ENCODE measurements at regions of chr2 and their contacts with region 1.

Region 1: GRCh38 chr2:237558906-237559641 is 7.3 kb upstream of the PRLH start:
- DNase-seq: peak; percentile 80 to 93 (median 87)
- H3K4me3 ChIP-seq: no peak overlapping the region
- H3K27ac ChIP-seq: no peak overlapping the region
- H3K4me1 ChIP-seq: peaks cover 14% of the 10 kb centered on the region
- H3K27me3 ChIP-seq: no peaks in the 10 kb centered on the region
- CTCF ChIP-seq: peak in 1 of 3 donors; percentile 7
- EP300 ChIP-seq: no peak
- POLR2A ChIP-seq: no peak

Region 2: GRCh38 chr2:237512774-237513466 is 46.2 kb before region 1 on chr2:
- intact Hi-C with region 1: loop called in 2 of 4 experiments (anchors 2 to 5 kb)
- DNase-seq: peak; percentile 90 to 94 (median 91)
- H3K4me3 ChIP-seq: no peak overlapping the region
- H3K27ac ChIP-seq: peak overlapping the region in 1 of 2 donors; percentile 86
- H3K4me1 ChIP-seq: peaks cover 25% of the 10 kb centered on the region
- H3K27me3 ChIP-seq: no peaks in the 10 kb centered on the region
- CTCF ChIP-seq: peak; percentile 71 to 95 (median 91)
- EP300 ChIP-seq: no peak
- POLR2A ChIP-seq: no peak

Region 3: GRCh38 chr2:237758185-237758584 is 199.1 kb after region 1 on chr2:
- intact Hi-C with region 1: no loop called
- DNase-seq: no peak
- H3K4me3 ChIP-seq: no peak overlapping the region
- H3K27ac ChIP-seq: no peak overlapping the region
- H3K4me1 ChIP-seq: no peaks in the 10 kb centered on the region
- H3K27me3 ChIP-seq: no peaks in the 10 kb centered on the region
- CTCF ChIP-seq: no peak
- EP300 ChIP-seq: no peak
- POLR2A ChIP-seq: no peak

Region 4: DNA sequence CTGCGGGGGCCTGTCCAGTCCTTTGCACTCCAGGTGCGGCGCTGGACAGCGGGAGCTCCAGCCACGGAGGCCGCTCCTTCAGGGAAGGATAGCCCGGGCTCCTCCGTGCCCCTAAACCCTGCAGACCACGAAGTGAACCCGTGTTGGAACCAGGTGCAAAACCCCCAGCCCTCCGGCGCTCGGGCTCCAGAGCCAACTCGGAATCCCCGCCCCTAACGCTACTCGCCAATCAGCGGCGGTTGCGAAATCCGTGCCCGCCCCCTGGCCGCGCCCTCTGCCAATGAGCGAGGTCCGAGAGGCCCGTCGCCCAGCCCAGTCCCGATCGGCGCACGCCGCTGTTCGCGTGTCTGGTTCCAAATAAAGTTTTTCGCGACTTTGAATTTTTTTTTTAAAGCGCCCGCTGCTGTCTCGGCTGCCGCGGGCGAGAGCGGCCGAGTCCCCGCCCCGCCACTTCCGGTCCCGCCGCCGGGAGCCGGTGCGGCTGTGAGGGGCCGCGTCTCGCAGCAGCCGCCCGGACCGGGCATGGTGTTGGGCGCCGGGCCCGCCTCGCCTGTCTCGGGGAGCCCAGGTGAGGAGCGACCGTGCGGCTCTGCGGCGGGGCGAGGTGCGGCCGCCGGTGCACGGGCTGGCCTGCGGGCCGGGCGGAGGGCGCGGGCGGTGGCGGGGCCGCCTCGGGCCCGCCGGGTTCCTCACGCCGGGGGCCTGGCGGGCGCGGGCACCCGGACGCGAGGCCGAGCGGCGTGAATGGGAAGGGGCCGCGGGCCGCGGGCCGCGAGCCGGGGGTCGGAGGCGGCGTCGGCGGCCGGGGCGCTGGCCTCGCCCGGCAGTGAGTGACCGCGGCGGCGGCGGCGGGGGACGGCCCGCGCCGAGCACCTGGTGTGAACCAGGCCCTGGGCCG is 407.7 kb after region 1 on chr2 and contains the start of gene UBE2F:
- intact Hi-C with region 1: no loop called
- DNase-seq: peak; percentile 96 to 98 (median 98)
- H3K4me3 ChIP-seq: peak within 1 kb of the TSS; percentile 66
- H3K27ac ChIP-seq: peak within 1 kb of the TSS in 1 of 2 donors; percentile 14
- H3K4me1 ChIP-seq: peaks cover 9% of the 10 kb centered on the region
- H3K27me3 ChIP-seq: no peaks in the 10 kb centered on the region
- CTCF ChIP-seq: no peak
- EP300 ChIP-seq: no peak
- POLR2A ChIP-seq: peak; percentile 68
- total RNA-seq, gene UBE2F: 20.3 to 44.0 (median 23.8) TPM